Endothelial cell of umbilical vein (primary cell): ENCODE measurements at regions of chr1 and their contacts with region 1.

Region 1: DNA sequence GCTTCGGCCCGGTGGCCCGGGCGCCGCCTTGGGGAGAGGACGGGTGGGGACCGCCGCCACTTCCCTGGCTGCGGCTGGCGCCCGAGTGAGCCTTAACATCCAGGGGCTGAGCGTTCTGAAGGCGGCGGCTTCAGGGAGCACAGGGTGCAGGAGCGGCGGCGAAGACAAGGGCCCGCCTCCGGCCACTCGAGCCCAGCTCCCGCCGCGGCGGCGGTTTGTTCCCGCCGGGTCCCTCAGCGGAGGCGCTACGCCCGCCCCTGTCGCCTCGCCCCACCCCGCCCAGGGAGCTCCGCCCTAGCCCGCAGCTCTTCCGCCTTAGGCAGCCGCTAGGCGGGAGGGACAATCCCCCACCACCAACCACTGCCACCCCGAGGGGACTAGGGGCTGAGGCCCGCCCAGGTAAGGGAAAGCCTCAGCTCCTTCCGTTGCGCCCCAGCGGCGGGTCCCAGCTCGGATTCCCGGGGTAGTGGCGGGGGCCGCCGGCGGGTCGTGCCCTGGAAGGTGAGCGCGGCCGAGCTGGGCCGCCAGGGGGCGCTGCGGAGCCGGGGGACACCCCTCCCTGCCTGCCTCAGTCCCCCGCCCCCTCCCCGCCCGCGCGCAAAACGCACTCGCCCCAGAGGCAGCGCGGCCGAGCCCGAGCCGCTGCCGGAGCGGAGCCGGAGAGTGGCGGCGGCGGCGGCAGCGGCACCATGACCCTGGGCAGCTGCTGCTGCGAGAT is at the start of gene FOXD2:
- DNase-seq: peak; percentile 82
- H3K4me3 ChIP-seq: peak within 1 kb of the TSS; percentile 55 to 71 (median 57)
- H3K27ac ChIP-seq: no peak within 1 kb of the TSS
- H3K4me1 ChIP-seq: peaks cover 17% of the 10 kb centered on the region
- H3K27me3 ChIP-seq: peaks cover 42 to 60% of the 10 kb centered on the region in 2 experiments
- CTCF ChIP-seq: peak; percentile 76 to 84
- POLR2A ChIP-seq: peak; percentile 39
- total RNA-seq, gene FOXD2: 0.07 and 0.09 TPM in 2 replicates

Region 2: GRCh38 chr1:47313915-47314664 is 123.5 kb before region 1 on chr1 and contains the start of gene STIL:
- CTCF ChIA-PET with region 1: interaction called, 6 read pairs
- POLR2A ChIA-PET with region 1: interaction called, 3 read pairs
- dilution Hi-C with region 1: no loop called
- intact Hi-C with region 1: loop called (anchors 1 kb)
- DNase-seq: peak; percentile 100
- H3K4me3 ChIP-seq: peak within 1 kb of the TSS; percentile 53 to 94 (median 92)
- H3K27ac ChIP-seq: peak within 1 kb of the TSS; percentile 81
- H3K4me1 ChIP-seq: peaks cover 10% of the 10 kb centered on the region
- H3K27me3 ChIP-seq: no peaks in the 10 kb centered on the region
- CTCF ChIP-seq: no peak
- POLR2A ChIP-seq: peak; percentile 62
- total RNA-seq, gene STIL: 24.7 and 28.1 TPM in 2 replicates

Region 3: GRCh38 chr1:47449822-47450552 is 12.4 kb after region 1 on chr1:
- CTCF ChIA-PET with region 1: interaction called, 63 read pairs
- POLR2A ChIA-PET with region 1: no interaction called
- dilution Hi-C with region 1: no loop called
- intact Hi-C with region 1: no loop called
- DNase-seq: no peak
- H3K4me3 ChIP-seq: no peak overlapping the region
- H3K27ac ChIP-seq: no peak overlapping the region
- H3K4me1 ChIP-seq: no peaks in the 10 kb centered on the region
- H3K27me3 ChIP-seq: peaks cover 62 to 66% of the 10 kb centered on the region in 2 experiments
- CTCF ChIP-seq: peak; percentile 41 to 69
- POLR2A ChIP-seq: no peak

Region 4: GRCh38 chr1:47532921-47533792 is 95.6 kb after region 1 on chr1:
- CTCF ChIA-PET with region 1: interaction called, 22 read pairs
- POLR2A ChIA-PET with region 1: no interaction called
- dilution Hi-C with region 1: no loop called
- intact Hi-C with region 1: loop called (anchors 2 kb)
- DNase-seq: peak; percentile 66
- H3K4me3 ChIP-seq: peak overlapping the region in 1 of 3 experiments; percentile 33
- H3K27ac ChIP-seq: no peak overlapping the region
- H3K4me1 ChIP-seq: no peaks in the 10 kb centered on the region
- H3K27me3 ChIP-seq: peaks cover 12 to 17% of the 10 kb centered on the region in 2 experiments
- CTCF ChIP-seq: no peak
- POLR2A ChIP-seq: no peak

Region 5: GRCh38 chr1:47608296-47608875 is 170.8 kb after region 1 on chr1:
- CTCF ChIA-PET with region 1: no interaction called
- POLR2A ChIA-PET with region 1: no interaction called
- dilution Hi-C with region 1: no loop called
- intact Hi-C with region 1: no loop called
- DNase-seq: no peak
- H3K4me3 ChIP-seq: no peak overlapping the region
- H3K27ac ChIP-seq: no peak overlapping the region
- H3K4me1 ChIP-seq: no peaks in the 10 kb centered on the region
- H3K27me3 ChIP-seq: no peaks in the 10 kb centered on the region
- CTCF ChIP-seq: no peak
- POLR2A ChIP-seq: no peak

Region 6: DNA sequence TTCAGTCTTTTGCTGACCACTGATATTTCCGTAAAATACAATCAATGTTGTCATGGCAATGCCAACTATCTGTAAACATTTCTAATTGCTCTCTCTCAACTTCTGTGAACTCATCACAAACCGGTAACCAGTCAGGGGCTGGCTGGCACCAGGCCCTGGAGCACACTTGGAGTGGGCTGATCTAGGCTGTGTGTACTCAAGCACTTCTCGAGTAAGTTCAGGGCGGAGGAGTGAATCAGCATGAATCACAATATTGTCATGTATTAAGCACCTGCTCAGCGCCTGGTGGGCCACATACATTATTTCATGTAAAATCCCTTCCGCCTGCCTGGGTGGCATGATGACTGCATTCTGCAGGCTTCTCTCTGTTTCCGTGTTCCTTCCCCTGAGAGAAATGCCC is 212.6 kb after region 1 on chr1:
- CTCF ChIA-PET with region 1: interaction called, 6 read pairs
- POLR2A ChIA-PET with region 1: no interaction called
- dilution Hi-C with region 1: no loop called
- intact Hi-C with region 1: loop called (anchors 1 kb)
- DNase-seq: peak; percentile 96
- H3K4me3 ChIP-seq: no peak overlapping the region
- H3K27ac ChIP-seq: peak overlapping the region; percentile 74
- H3K4me1 ChIP-seq: peaks cover 11% of the 10 kb centered on the region
- H3K27me3 ChIP-seq: no peaks in the 10 kb centered on the region
- CTCF ChIP-seq: no peak
- POLR2A ChIP-seq: no peak

Region 7: DNA sequence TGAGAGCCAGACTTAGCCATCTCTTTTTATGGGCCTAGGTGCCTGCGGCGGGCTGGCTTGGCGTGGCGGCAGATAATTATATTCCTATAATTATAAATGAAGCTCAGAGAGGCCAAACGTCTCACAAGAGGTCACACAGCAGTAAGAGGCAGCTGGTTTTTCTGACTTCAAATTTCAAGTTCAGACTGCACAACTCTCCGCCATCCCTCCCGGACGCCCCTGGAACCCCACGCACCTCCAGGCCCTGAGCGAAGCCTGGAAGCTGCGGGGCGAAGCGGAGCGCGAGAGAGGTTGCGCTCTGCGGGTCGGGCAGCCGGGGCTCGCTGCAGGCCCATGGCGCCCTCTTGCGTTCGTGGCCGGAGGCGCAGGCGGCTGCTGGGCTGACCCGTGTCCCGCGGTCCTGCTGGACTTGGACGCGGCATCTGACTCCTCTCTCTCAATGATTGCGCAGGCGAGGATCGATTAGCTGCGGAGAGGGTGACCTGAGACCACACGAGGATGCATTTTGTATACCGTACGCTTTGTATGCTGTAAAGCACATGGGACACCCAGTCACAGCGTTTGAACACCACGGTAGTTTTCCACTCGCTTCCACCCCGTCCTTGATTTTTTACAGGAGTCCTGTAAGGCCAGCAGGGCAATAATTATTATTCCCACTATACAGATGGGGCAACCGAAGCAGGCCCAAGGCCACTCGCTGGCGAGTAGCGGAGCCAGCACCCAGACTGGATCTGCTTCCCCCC is 272.9 kb after region 1 on chr1:
- CTCF ChIA-PET with region 1: interaction called, 416 read pairs
- POLR2A ChIA-PET with region 1: no interaction called
- dilution Hi-C with region 1: no loop called
- intact Hi-C with region 1: loop called (anchors 1 kb)
- DNase-seq: peak; percentile 56
- H3K4me3 ChIP-seq: no peak overlapping the region
- H3K27ac ChIP-seq: no peak overlapping the region
- H3K4me1 ChIP-seq: peaks cover 7% of the 10 kb centered on the region
- H3K27me3 ChIP-seq: peaks cover 59 to 66% of the 10 kb centered on the region in 2 experiments
- CTCF ChIP-seq: peak; percentile 98 to 99
- POLR2A ChIP-seq: no peak

Region 8: GRCh38 chr1:47788761-47789160 is 351.2 kb after region 1 on chr1:
- CTCF ChIA-PET with region 1: no interaction called
- POLR2A ChIA-PET with region 1: no interaction called
- dilution Hi-C with region 1: no loop called
- intact Hi-C with region 1: no loop called
- DNase-seq: no peak
- H3K4me3 ChIP-seq: no peak overlapping the region
- H3K27ac ChIP-seq: no peak overlapping the region
- H3K4me1 ChIP-seq: no peaks in the 10 kb centered on the region
- H3K27me3 ChIP-seq: no peaks in the 10 kb centered on the region
- CTCF ChIP-seq: no peak
- POLR2A ChIP-seq: no peak

Region 9: DNA sequence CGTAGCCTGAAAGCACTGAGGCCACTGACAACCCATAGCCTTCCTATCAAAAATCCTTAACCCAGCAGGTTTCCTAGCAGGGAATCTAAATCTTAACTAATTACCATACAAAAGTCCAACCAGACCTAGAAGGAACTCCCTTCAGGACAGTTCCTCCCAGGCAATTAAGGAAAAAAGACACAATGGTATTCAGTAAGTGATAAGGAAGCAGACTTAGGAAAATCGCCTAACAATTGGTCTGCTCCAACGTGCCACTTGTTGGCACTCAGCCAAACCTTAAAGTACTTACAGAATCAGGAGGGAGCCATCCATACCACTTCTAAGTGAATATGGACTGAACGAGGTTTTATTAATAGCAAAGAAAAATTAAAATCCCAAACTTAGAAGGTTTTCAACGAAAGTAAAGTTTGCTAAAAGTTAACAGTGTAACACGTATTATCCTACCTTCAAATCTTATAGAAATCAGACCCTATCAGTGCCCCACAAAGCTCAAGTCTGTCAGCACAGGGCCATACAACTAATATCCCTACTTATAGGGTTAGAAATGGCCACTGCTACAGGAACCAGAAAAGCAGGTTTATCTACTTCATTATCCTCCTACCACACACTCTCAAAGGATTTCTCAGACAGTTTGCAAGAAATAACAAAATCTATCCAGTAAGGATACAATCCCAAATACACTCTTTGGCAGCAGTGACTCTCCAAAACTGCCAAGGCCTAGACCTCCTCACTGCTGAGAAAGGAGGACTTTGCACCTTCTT is 1005.4 kb after region 1 on chr1:
- CTCF ChIA-PET with region 1: no interaction called
- POLR2A ChIA-PET with region 1: no interaction called
- dilution Hi-C with region 1: no loop called
- intact Hi-C with region 1: no loop called
- DNase-seq: peak; percentile 2
- H3K4me3 ChIP-seq: no peak overlapping the region
- H3K27ac ChIP-seq: no peak overlapping the region
- H3K4me1 ChIP-seq: no peaks in the 10 kb centered on the region
- H3K27me3 ChIP-seq: no peaks in the 10 kb centered on the region
- CTCF ChIP-seq: no peak
- POLR2A ChIP-seq: no peak